ENCODE measurements at regions of chr11 and their contacts with region 1.

Region 1: DNA sequence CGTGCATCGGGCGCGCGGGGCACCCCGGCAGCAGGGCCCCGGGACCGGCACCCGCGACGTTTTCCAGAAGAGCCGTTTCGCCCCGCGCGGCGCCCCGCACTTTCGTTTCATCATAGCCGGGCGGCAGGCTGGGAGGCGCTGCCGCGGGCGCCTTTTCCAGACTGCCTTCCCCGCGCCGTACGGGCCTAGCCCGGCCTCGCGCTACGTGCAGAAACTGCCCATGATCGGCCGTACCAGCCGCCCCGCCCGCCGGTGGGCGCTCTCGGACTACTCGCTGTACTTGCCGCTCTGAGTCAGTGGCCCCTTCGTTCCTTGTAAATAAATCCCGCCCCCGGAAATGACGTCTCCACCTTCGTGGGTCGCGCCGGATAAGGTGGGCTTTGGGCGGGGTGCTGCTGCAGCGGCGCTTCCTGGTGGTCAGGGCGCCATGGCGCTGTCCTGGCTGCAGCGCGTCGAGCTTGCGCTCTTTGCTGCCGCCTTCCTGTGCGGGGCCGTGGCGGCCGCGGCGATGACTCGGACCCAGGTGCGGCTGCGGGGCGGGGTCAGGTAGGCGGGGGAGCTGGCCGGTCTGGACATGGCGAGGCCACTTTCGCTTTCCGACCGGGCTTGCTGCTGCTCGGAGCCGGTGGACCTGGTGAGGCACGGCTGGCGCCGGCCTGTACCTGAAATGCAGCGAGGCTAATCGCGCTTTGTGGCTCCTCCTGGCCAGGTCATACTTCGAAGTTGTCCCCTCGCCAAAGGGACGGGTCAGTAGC is at the start of gene TMEM179B:
- DNase-seq: peak; percentile 95 to 100 (median 99)
- H3K4me3 ChIP-seq: peak within 1 kb of the TSS; percentile 64 to 100 (median 94)
- H3K27ac ChIP-seq: peak within 1 kb of the TSS; percentile 52 to 99 (median 97)
- H3K27me3 ChIP-seq: no peaks in the 10 kb centered on the region
- CTCF ChIP-seq: peak in 49 of 56 donors; percentile 11 to 71 (median 46)
- total RNA-seq, gene TMEM179B: 12.2 to 34.2 (median 19.6) TPM

Region 2: GRCh38 chr11:62472012-62472884 is 314.9 kb before region 1 on chr11:
- intact Hi-C with region 1: no loop called
- DNase-seq: no peak
- H3K4me3 ChIP-seq: no peak overlapping the region
- H3K27ac ChIP-seq: no peak overlapping the region
- H3K27me3 ChIP-seq: no peaks in the 10 kb centered on the region
- CTCF ChIP-seq: no peak

Region 3: GRCh38 chr11:62726915-62727763 is 60.0 kb before region 1 on chr11 and contains the start of gene HNRNPUL2:
- intact Hi-C with region 1: loop called in 1 of 2 experiments (anchors 2 kb)
- DNase-seq: peak; percentile 95 to 98 (median 96)
- H3K4me3 ChIP-seq: peak within 1 kb of the TSS; percentile 64 to 99 (median 91)
- H3K27ac ChIP-seq: peak within 1 kb of the TSS; percentile 85 to 99 (median 98)
- H3K27me3 ChIP-seq: no peaks in the 10 kb centered on the region
- CTCF ChIP-seq: peak in 32 of 56 donors; percentile 3 to 52 (median 26)
- total RNA-seq, gene HNRNPUL2: 49.2 to 100 (median 74.3) TPM

Region 4: GRCh38 chr11:62771144-62772021 is 15.8 kb before region 1 on chr11 and contains the start of gene TAF6L:
- intact Hi-C with region 1: loop called in 1 of 2 experiments (anchors 1 kb)
- DNase-seq: peak; percentile 97 to 100 (median 98)
- H3K4me3 ChIP-seq: peak within 1 kb of the TSS; percentile 61 to 100 (median 82)
- H3K27ac ChIP-seq: peak within 1 kb of the TSS; percentile 86 to 99 (median 97)
- H3K27me3 ChIP-seq: no peaks in the 10 kb centered on the region
- CTCF ChIP-seq: peak in 16 of 56 donors; percentile 2 to 41 (median 20)
- total RNA-seq, gene TAF6L: 9.3 to 39.3 (median 22.8) TPM

Region 5: GRCh38 chr11:62831520-62832335 is 44.5 kb after region 1 on chr11 and contains the start of gene STX5:
- intact Hi-C with region 1: loop called (anchors 5 kb)
- DNase-seq: peak; percentile 100
- H3K4me3 ChIP-seq: peak within 1 kb of the TSS; percentile 71 to 100 (median 95)
- H3K27ac ChIP-seq: peak within 1 kb of the TSS in 58 of 59 donors; percentile 49 to 96 (median 86)
- H3K27me3 ChIP-seq: no peaks in the 10 kb centered on the region
- CTCF ChIP-seq: peak in 3 of 56 donors; percentile 6 to 8 (median 8)
- total RNA-seq, gene STX5: 32.4 to 53.5 (median 41.9) TPM

Region 6: GRCh38 chr11:62855571-62856332 is 68.6 kb after region 1 on chr11:
- intact Hi-C with region 1: loop called (anchors 5 kb)
- DNase-seq: peak; percentile 91 to 97 (median 94)
- H3K4me3 ChIP-seq: peak overlapping the region; percentile 64 to 100 (median 90)
- H3K27ac ChIP-seq: peak overlapping the region; percentile 31 to 94 (median 82)
- H3K27me3 ChIP-seq: no peaks in the 10 kb centered on the region
- CTCF ChIP-seq: peak in 47 of 56 donors; percentile 15 to 65 (median 40)

Measured in dorsolateral prefrontal cortex (tissue), 120 donors.